Sigmoid colon (tissue), 7 donors: ENCODE measurements at regions of chr12 and their contacts with region 1.

Region 1: DNA sequence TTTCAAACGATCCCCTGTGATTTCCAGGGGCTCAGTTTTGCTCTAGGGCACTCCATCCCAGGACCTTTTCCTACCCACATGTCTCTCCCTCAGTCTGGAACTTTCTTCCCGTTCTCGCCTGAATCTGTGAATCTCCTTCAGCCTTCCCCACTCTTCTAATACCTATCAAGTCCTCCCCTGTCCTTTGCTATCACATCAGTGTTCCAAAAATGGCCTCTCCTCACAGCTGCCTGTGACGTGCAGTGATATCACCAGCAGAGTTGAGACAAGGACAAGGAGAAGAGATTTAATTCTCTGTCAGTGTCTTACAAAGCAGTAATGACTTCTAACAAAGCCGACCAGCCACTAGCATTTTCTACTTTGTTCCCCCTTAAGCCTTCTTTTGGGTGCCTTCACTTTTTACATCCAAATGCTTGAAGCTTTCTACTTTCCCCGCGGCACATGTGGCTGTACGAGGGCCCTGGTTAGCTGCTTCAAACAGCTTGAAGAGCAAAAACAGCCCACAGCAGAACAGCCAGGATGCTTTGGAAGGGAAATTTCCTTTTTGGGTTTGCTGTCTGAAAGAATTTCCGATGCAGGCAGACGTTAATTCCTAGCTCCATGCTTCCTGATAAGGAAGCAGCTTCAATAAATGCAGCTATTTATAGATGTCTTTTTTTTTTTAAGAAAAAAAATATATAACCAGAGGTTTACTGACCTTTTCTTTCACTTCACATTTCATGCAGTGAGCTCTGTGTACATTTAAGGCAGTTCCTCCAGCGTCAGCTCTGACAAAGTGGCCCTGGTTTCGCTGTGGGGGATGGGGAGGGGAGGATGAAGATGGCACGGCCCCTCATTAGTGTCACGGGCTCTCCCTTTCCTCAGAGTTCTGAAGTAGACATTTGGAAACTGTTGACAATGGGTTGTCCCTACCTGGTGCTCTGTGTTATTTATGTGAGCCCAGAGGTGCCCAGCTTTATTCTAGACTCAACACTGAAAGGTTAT is 109.3 kb downstream of the ETV6 start:
- DNase-seq: no peak
- H3K4me3 ChIP-seq: no peak overlapping the region
- H3K27ac ChIP-seq: peak overlapping the region; percentile 82 to 92 (median 90)
- H3K4me1 ChIP-seq: peaks cover 0 to 96% (median 83%) of the 10 kb centered on the region in 4 donors
- H3K27me3 ChIP-seq: no peaks in the 10 kb centered on the region
- CTCF ChIP-seq: no peak
- EP300 ChIP-seq: peak in 2 of 4 donors; percentile 46 to 68
- POLR2A ChIP-seq: no peak

Region 2: GRCh38 chr12:11564984-11565651 is 193.7 kb before region 1 on chr12:
- intact Hi-C with region 1: no loop called
- DNase-seq: no peak
- H3K4me3 ChIP-seq: no peak overlapping the region
- H3K27ac ChIP-seq: no peak overlapping the region
- H3K4me1 ChIP-seq: peaks cover 0 to 22% (median 9%) of the 10 kb centered on the region in 4 donors
- H3K27me3 ChIP-seq: no peaks in the 10 kb centered on the region
- CTCF ChIP-seq: no peak
- EP300 ChIP-seq: no peak
- POLR2A ChIP-seq: no peak

Region 3: DNA sequence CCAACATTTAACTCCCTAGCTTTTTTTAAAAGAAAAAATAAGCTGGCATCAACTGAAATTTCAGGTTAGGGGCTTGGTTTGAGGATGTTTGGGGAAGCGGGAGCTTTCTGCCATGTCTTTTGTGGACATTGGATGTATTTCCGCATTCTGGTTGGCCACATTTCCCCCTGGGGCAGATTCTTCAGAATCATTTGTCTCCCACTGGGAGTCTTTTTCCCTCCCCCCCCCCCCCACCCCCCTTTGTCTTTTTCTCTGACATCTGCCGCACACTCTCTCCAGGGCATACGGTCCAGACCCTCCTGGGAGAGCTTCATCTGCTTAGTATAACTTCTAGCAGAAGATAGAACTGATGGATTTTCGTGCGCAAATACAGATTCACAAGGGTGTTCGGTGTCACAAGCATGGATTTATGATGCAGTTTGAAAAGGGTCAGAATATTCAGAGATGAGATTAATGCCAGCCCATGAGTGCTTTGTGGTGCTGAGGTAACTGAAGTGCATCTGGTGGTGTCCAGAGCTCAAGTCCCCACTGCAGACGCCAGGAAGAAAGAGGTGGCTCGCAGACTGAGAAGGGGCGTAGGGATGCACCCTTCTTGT is 69.1 kb before region 1 on chr12:
- intact Hi-C with region 1: loop called (anchors 5 kb)
- DNase-seq: no peak
- H3K4me3 ChIP-seq: no peak overlapping the region
- H3K27ac ChIP-seq: peak overlapping the region in 3 of 4 donors; percentile 71 to 90 (median 87)
- H3K4me1 ChIP-seq: peaks cover 0 to 88% (median 82%) of the 10 kb centered on the region in 4 donors
- H3K27me3 ChIP-seq: no peaks in the 10 kb centered on the region
- CTCF ChIP-seq: no peak
- EP300 ChIP-seq: peak in 3 of 4 donors; percentile 58 to 88 (median 88)
- POLR2A ChIP-seq: no peak

Region 4: DNA sequence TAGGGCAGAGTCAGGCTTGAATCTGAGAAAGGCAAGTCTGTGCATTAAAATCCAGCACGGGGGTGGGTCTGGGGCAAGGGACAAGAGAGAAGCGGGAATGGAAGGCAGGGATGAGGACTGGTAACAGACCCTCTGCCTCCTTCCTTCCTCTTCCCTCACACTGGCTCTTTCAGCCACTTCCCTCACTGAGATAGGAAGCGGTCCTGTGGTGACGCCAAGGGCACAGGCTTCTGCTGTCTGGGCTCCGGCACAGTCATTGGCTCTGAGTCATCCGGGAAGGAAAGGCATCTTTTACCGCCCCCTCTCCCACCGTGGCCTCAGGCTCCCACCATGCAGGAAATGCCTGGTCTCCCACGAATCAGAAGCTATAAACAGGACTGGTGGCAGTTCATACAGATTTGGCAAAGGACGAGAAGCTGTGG is 39.1 kb before region 1 on chr12:
- intact Hi-C with region 1: loop called (anchors 2 kb)
- DNase-seq: peak; percentile 76
- H3K4me3 ChIP-seq: no peak overlapping the region
- H3K27ac ChIP-seq: peak overlapping the region; percentile 60 to 79 (median 70)
- H3K4me1 ChIP-seq: peaks cover 0 to 73% (median 54%) of the 10 kb centered on the region in 4 donors
- H3K27me3 ChIP-seq: no peaks in the 10 kb centered on the region
- CTCF ChIP-seq: no peak
- EP300 ChIP-seq: no peak
- POLR2A ChIP-seq: no peak

Region 5: GRCh38 chr12:11822081-11822834 is 63.5 kb after region 1 on chr12:
- intact Hi-C with region 1: no loop called
- DNase-seq: no peak
- H3K4me3 ChIP-seq: no peak overlapping the region
- H3K27ac ChIP-seq: peak overlapping the region in 3 of 4 donors; percentile 57 to 66 (median 65)
- H3K4me1 ChIP-seq: peaks cover 0 to 62% (median 35%) of the 10 kb centered on the region in 4 donors
- H3K27me3 ChIP-seq: no peaks in the 10 kb centered on the region
- CTCF ChIP-seq: no peak
- EP300 ChIP-seq: no peak
- POLR2A ChIP-seq: no peak

Region 6: DNA sequence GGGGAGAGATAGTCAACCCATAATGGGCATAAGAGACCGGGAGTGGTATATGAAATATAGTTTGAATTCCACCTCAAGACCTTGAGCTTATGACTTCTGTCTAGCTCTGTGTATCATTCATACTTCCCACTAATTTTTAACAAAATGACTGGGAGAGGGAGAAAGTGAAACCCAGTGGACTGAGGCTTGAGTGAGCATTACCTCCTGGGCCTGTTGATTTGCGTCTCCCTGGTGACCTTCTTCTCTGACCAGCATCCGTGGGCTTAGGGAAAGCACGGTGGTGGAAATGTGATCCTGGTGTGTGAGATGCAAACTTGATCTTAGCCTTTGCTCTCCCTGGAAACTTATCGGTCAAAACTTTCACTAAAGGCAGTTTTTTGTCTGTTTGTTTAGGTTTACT is 104.0 kb after region 1 on chr12:
- intact Hi-C with region 1: loop called (anchors 5 kb)
- DNase-seq: no peak
- H3K4me3 ChIP-seq: no peak overlapping the region
- H3K27ac ChIP-seq: peak overlapping the region; percentile 82 to 88 (median 84)
- H3K4me1 ChIP-seq: peaks cover 0 to 54% (median 51%) of the 10 kb centered on the region in 4 donors
- H3K27me3 ChIP-seq: no peaks in the 10 kb centered on the region
- CTCF ChIP-seq: no peak
- EP300 ChIP-seq: no peak
- POLR2A ChIP-seq: no peak